Common myeloid progenitor, CD34-positive (primary cell): ENCODE measurements at regions of chr10 and their contacts with region 1.

Region 1: DNA sequence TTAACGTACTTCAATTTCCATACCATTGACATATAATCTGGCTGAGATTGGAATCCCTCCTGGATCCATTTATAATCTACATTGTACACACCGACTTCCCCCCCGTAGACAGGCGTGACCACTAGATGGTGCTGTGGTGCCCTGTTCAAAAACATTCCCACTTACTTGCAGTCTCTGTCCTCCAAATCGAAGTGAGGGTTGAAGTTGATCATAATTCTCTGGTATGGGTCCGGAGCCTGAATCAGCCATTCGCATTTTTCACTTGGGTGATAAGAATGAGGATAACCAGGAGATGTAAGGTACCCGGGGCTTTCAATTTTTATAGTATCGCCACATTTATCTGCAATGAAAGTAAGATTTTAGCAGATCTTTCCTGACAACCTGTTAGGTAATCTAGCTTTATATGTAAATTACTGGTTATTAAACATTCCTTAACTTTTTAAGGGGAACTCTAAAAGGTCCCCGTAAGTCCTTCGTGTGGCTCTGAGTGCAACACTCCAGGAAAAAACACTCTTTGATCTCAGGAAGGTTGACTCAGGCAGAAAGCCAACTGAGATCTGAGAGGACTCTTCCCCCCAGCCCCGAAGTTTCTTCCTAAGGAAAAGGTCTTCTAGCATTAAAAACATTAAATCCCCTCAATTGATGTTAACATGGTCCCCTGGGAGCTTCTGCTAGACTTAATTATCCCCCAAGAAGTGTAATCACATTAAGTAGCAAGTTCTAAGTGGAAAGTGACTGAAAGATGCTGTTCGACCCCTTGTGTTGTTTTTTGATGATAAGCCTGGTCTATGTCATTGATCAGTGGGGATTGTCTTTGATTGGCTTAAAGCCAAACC is 3.7 kb downstream of the NRP1 start:
- DNase-seq: peak; percentile 69 to 77 (median 74)
- H3K4me3 ChIP-seq: no peak overlapping the region
- H3K27ac ChIP-seq: no peak overlapping the region
- H3K4me1 ChIP-seq: peaks cover 0 to 24% (median 22%) of the 10 kb centered on the region in 4 experiments
- H3K27me3 ChIP-seq: peaks cover 7 to 59% (median 27%) of the 10 kb centered on the region in 5 experiments

Region 2: DNA sequence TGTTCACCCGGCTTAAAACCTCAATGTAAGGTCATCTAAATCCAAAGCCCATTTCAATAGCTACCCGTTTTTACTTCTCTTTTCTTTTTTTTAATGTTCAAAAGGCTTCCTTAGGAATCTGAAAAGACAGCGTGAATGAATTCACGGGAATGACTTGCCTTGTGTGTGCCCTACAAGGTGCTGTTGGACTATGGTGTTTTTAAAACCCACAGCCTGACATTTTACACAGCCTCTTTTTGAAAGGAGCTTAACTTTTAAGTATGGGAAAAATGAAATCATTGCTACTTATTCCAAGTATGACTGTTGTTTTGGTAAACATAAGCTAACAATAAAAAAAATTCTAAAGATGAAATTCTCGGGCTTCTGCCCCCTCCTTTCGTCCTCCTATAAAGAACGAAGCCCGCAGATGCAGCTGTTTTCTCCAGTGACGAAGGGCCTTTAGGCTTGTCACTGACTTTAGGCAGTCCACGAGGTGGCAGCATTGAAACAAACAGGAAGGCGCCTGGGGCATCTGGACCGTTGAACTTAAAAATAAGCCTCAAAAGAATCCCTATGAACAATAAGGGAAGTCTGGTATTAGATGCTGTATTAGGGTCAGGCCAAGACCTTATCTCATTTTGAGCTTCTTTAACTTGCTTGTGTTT is 137.6 kb before region 1 on chr10:
- CTCF ChIA-PET with region 1: interaction called, 10 read pairs
- POLR2A ChIA-PET with region 1: no interaction called
- DNase-seq: peak; percentile 79 to 92 (median 92)
- H3K4me3 ChIP-seq: no peak overlapping the region
- H3K27ac ChIP-seq: no peak overlapping the region
- H3K4me1 ChIP-seq: peaks cover 0 to 6% (median under 1%) of the 10 kb centered on the region in 4 experiments
- H3K27me3 ChIP-seq: peaks cover 0 to 11% (median 7%) of the 10 kb centered on the region in 5 experiments

Region 3: DNA sequence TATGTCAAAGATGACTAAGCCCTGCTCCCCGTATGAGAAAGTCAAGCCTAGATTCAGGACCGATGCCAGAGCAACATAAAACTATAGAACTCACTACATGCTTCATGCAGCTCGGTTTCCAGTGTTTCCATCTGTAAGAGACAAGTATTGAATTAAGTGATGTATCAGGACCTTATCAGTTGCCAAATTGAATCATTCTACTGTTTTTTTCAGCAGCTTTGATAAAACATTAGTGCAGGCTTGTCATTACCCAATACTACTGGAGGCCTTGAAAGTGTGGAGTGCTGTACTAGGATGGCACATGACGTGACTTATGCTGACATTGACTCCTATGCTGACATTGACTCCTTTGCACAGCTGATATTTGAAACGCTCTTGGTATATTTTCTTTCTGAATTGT is 14.5 kb after region 1 on chr10:
- CTCF ChIA-PET with region 1: interaction called, 15 read pairs
- POLR2A ChIA-PET with region 1: no interaction called
- DNase-seq: no peak
- H3K4me3 ChIP-seq: no peak overlapping the region
- H3K27ac ChIP-seq: no peak overlapping the region
- H3K4me1 ChIP-seq: no peaks in the 10 kb centered on the region
- H3K27me3 ChIP-seq: peaks cover 0 to 10% (median 2%) of the 10 kb centered on the region in 5 experiments

Region 4: DNA sequence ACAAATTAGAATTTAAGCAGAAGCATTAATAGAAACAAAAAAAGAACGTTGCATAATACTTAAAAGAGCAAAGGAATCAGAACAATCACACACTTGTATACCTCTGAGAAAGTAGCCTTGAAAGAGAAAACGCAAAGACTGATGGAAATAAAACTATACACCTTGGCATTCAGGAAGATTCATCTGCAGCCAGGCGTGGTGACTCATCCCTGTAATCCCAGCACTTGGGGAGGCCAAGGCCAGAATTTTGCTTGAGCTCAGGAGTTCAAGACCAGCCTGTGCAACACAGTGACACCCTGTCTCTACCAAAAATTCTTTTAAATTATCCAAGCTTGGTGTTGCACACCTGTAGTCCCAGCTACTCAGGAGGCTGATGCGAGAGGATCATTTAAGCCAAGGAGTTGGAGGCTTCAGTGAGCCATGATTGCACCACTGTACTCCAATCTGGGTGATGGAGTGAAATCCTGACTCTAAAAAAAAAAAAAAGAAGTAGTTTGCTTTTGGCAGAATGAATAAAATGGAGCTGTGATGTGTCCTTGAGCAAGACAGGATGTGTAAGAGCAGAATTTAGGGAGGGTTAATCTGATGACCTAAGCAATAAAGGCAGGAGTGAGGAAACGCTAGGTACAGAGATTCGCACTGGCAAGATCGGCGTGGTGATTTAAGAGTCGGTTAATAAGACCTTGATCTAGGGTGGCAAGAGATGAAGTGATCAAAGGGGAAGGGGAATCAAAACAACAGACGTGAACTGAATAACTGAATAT is 79.5 kb after region 1 on chr10:
- CTCF ChIA-PET with region 1: no interaction called
- POLR2A ChIA-PET with region 1: no interaction called
- DNase-seq: no peak
- H3K4me3 ChIP-seq: no peak overlapping the region
- H3K27ac ChIP-seq: no peak overlapping the region
- H3K4me1 ChIP-seq: no peaks in the 10 kb centered on the region
- H3K27me3 ChIP-seq: peaks cover 0 to 6% (median 0%) of the 10 kb centered on the region in 5 experiments

Region 5: GRCh38 chr10:34637418-34637911 is 1306.7 kb after region 1 on chr10:
- CTCF ChIA-PET with region 1: interaction called, 41 read pairs
- POLR2A ChIA-PET with region 1: no interaction called
- DNase-seq: peak; percentile 51 to 90 (median 89)
- H3K4me3 ChIP-seq: peak overlapping the region in 2 of 7 experiments; percentile 12 to 57
- H3K27ac ChIP-seq: no peak overlapping the region
- H3K4me1 ChIP-seq: peaks cover 0 to 16% (median 7%) of the 10 kb centered on the region in 4 experiments
- H3K27me3 ChIP-seq: no peaks in the 10 kb centered on the region